Vagina (tissue), 2 donors: ENCODE measurements at regions of chrX and their contacts with region 1.

Region 1: DNA sequence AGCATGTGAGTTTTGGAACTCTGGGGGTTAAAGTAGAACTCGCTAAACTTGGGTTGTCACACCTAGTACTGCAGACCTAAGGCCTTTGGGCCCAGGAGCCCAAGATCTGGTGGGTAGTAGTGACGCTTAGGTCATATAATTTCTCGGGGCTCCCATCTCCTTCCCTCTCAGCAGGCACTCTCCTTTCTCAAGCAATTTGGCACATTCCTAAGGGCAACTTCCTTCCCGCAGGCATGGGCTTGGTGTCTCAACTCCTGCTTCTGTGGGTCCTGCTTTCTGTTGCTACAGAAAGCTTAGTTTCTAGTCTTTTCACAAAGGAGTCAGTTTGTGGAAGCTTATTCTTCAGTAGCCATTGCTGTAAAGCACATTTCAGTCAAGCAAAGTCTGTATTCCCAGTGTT is 10.4 kb upstream of the EDA start:
- DNase-seq: no peak
- H3K4me3 ChIP-seq: no peak overlapping the region
- H3K27ac ChIP-seq: no peak overlapping the region
- H3K4me1 ChIP-seq: no peaks in the 10 kb centered on the region
- H3K27me3 ChIP-seq: no peaks in the 10 kb centered on the region
- CTCF ChIP-seq: no peak
- POLR2A ChIP-seq: no peak

Region 2: DNA sequence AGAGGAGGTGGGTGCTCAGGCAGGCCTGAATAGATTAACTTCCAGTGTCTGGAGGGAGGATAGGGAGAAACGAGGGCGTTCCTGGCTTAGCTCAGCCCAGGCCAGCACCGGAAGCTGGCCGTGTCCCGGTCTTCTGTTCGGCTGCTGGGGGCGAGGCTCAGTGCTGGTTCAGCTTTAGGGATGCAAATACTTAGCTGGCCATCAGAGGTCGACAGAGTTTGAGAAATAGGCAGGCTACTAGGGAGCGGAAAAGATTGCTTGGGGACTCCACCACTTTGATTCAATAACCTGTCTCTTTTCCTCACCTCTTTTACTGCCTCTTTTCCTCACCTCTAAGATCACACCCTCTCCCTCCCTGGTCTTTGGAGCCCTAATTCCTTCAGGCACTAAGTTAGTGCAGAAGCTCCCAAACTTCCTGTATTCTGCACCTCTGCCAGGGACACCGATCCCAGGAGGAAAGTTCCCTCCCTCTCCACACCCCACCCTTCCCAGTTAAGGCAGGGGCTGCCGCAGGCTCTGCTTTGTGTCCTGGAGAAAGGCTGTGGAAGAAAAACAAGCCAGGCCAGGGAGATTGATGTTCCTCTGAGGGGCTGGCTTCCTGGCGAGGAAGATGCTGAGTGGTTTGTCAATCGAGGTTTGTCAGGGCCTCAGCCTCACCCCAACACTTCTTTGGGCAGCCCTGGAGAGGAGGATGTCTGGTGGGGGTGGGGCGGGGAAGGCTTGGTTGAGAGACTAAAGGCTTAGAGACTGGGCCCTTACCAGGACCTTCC is 782.7 kb before region 1 on chrX:
- intact Hi-C with region 1: loop called (anchors 5 kb)
- DNase-seq: peak; percentile 77 to 85
- H3K4me3 ChIP-seq: no peak overlapping the region
- H3K27ac ChIP-seq: no peak overlapping the region
- H3K4me1 ChIP-seq: no peaks in the 10 kb centered on the region
- H3K27me3 ChIP-seq: no peaks in the 10 kb centered on the region
- CTCF ChIP-seq: peak in 2 of 3 experiments; percentile 36 to 38
- POLR2A ChIP-seq: no peak